ENCODE measurements at regions of chr6 and their contacts with region 1.

Region 1: DNA sequence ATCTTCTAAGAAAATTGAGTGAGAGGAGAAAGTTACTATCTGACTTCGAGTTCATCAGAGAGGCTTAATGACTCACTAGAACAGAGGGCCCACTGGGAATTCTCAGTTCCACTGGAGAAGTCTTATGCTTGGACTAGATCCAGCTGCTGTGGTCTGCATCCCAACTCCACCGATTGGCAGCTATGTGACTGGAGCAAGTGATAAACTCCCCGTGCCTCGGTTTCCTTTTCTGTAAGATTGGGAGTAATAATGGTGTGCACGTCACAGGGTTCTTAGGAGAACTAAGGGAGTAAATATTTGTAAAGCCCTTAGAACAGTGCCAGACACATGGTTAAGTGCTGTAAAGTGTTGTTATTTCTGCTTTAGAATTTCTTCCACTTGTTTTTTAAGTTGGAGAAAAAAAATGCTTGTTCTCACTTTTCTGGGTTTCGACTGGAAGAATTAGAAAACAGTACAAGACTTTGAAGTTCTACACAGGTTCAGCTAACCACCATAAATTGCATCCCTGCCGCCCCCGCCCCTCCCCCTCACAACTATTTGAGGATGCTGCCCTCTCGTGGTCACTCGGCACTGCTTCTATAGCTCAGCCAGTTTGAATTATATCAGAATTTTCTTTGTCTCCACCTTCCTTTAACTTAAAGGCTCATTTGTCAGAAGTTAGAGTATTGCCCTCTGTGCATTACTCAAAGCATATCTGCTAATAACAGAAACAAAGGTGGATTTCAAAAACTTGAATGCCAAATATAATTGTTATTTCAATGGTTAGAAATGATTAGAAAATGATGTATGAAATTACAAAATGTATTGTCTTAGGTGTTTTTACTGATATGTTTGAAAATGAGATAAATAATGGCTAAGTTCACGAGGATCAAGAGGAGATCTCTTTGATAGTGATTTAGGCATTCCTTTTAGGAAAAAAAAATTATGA is 95.0 kb upstream of the IFNGR1 start:
- DNase-seq: peak; percentile 43 to 84 (median 73)
- ATAC-seq: peak; percentile 73
- H3K4me3 ChIP-seq: no peak overlapping the region
- H3K4me3 Mint-ChIP-seq: no peak overlapping the region
- H3K27ac ChIP-seq: no peak overlapping the region
- H3K27ac Mint-ChIP-seq: no peak overlapping the region
- H3K4me1 ChIP-seq: no peaks in the 10 kb centered on the region
- H3K4me1 Mint-ChIP-seq: peaks cover 8% of the 10 kb centered on the region
- H3K27me3 ChIP-seq: no peaks in the 10 kb centered on the region
- H3K27me3 Mint-ChIP-seq: no peaks in the 10 kb centered on the region
- CTCF ChIP-seq: peak; percentile 73

Region 2: GRCh38 chr6:135527116-135527959 is 1786.9 kb before region 1 on chr6:
- CTCF ChIA-PET with region 1: no interaction called
- POLR2A ChIA-PET with region 1: no interaction called
- intact Hi-C with region 1: no loop called
- DNase-seq: no peak
- ATAC-seq: no peak
- H3K4me3 ChIP-seq: no peak overlapping the region
- H3K4me3 Mint-ChIP-seq: no peak overlapping the region
- H3K27ac ChIP-seq: no peak overlapping the region
- H3K27ac Mint-ChIP-seq: no peak overlapping the region
- H3K4me1 ChIP-seq: no peaks in the 10 kb centered on the region
- H3K4me1 Mint-ChIP-seq: no peaks in the 10 kb centered on the region
- H3K27me3 ChIP-seq: no peaks in the 10 kb centered on the region
- H3K27me3 Mint-ChIP-seq: no peaks in the 10 kb centered on the region
- CTCF ChIP-seq: no peak

Region 3: GRCh38 chr6:137076277-137077068 is 237.7 kb before region 1 on chr6:
- CTCF ChIA-PET with region 1: interaction called, 9 read pairs
- POLR2A ChIA-PET with region 1: interaction called, 5 read pairs
- intact Hi-C with region 1: loop called in 1 of 2 experiments (anchors 1 kb)
- DNase-seq: peak; percentile 22 to 71 (median 47)
- ATAC-seq: peak; percentile 62
- H3K4me3 ChIP-seq: no peak overlapping the region
- H3K4me3 Mint-ChIP-seq: no peak overlapping the region
- H3K27ac ChIP-seq: no peak overlapping the region
- H3K27ac Mint-ChIP-seq: no peak overlapping the region
- H3K4me1 ChIP-seq: no peaks in the 10 kb centered on the region
- H3K4me1 Mint-ChIP-seq: no peaks in the 10 kb centered on the region
- H3K27me3 ChIP-seq: no peaks in the 10 kb centered on the region
- H3K27me3 Mint-ChIP-seq: peaks cover 16% of the 10 kb centered on the region
- CTCF ChIP-seq: peak; percentile 57

Region 4: DNA sequence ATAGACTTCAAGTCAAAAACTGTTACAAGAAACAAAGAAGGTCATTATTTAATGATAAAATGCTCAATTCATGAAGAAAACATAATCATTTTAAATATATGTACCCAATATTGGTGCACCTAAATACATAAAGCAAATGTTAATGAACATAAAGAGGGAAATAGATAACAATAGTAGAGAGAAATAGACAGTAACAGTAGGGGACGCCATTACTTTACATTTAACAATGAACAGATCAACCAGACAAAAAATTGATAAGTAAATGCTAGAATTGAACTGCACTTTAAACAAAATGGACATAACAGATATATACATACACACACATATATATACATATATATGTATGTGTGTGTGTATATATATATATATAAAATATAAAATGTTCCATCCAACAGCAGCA is 178.1 kb before region 1 on chr6:
- CTCF ChIA-PET with region 1: interaction called, 3 read pairs
- POLR2A ChIA-PET with region 1: no interaction called
- intact Hi-C with region 1: loop called in 1 of 2 experiments (anchors 1 kb)
- DNase-seq: peak in 2 of 9 experiments; percentile 36 to 44
- ATAC-seq: no peak
- H3K4me3 ChIP-seq: no peak overlapping the region
- H3K4me3 Mint-ChIP-seq: no peak overlapping the region
- H3K27ac ChIP-seq: no peak overlapping the region
- H3K27ac Mint-ChIP-seq: no peak overlapping the region
- H3K4me1 ChIP-seq: no peaks in the 10 kb centered on the region
- H3K4me1 Mint-ChIP-seq: no peaks in the 10 kb centered on the region
- H3K27me3 ChIP-seq: no peaks in the 10 kb centered on the region
- H3K27me3 Mint-ChIP-seq: peaks cover 4% of the 10 kb centered on the region
- CTCF ChIP-seq: no peak

Region 5: GRCh38 chr6:137297887-137298286 is 16.3 kb before region 1 on chr6:
- CTCF ChIA-PET with region 1: interaction called, 10 read pairs
- POLR2A ChIA-PET with region 1: no interaction called
- intact Hi-C with region 1: no loop called
- DNase-seq: no peak
- ATAC-seq: no peak
- H3K4me3 ChIP-seq: no peak overlapping the region
- H3K4me3 Mint-ChIP-seq: no peak overlapping the region
- H3K27ac ChIP-seq: no peak overlapping the region
- H3K27ac Mint-ChIP-seq: no peak overlapping the region
- H3K4me1 ChIP-seq: no peaks in the 10 kb centered on the region
- H3K4me1 Mint-ChIP-seq: no peaks in the 10 kb centered on the region
- H3K27me3 ChIP-seq: no peaks in the 10 kb centered on the region
- H3K27me3 Mint-ChIP-seq: no peaks in the 10 kb centered on the region
- CTCF ChIP-seq: no peak

Measured in CD8-positive, alpha-beta T cell (primary cell).